Dendritic cell treated with granulocyte-macrophage colony-stimulating factor and Interleukin-4, amounts not matched to agents 40 ng/mL and 50 ng/mL, for 4 days (primary cell): ENCODE measurements at regions of chr11 and their contacts with region 1.

Region 1: DNA sequence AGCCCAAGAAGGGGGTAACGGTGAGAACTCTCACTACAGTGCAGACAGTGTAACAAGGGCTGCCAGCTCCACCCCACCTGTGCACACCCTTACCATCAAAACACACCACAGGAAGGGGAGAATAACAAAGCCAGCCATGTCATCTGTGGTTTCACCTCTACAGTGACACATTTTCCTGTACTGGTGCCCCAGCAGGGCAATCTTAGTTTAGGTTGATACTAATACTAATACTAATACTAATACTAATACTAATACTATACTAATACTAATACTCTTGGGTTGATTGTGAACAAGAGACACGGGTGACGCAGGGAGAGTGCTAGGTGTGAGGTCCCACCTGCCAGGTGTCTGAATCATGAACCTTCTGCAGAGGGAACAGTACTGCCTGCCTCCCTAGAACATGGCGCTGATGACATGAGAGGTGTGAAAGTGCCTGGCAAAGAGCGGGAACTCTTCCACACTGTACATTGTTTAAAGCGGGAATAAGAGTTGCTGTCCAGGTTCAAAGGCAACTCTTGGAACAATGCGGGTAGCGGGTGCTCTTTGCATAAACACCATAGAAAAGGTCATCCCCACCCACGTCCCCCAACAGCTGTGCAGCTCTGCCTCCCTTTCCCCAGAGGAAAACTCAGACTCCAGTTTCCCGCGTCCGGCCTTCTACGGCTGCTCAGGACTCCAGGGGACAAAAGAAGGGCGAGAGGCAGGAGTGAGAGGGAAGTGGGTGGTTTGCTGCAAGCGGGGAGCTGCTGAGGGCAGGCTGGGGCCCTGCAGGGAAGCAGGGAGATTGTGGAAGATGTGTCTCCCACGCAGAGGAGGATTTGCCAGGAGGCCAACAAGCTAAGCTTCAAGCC is 25.0 kb upstream of the TMPRSS4 start:
- H3K4me3 Mint-ChIP-seq: no peak overlapping the region
- H3K27ac Mint-ChIP-seq: peak overlapping the region; percentile 79
- H3K4me1 Mint-ChIP-seq: peaks cover 67% of the 10 kb centered on the region
- H3K27me3 Mint-ChIP-seq: peaks cover 4% of the 10 kb centered on the region

Region 2: DNA sequence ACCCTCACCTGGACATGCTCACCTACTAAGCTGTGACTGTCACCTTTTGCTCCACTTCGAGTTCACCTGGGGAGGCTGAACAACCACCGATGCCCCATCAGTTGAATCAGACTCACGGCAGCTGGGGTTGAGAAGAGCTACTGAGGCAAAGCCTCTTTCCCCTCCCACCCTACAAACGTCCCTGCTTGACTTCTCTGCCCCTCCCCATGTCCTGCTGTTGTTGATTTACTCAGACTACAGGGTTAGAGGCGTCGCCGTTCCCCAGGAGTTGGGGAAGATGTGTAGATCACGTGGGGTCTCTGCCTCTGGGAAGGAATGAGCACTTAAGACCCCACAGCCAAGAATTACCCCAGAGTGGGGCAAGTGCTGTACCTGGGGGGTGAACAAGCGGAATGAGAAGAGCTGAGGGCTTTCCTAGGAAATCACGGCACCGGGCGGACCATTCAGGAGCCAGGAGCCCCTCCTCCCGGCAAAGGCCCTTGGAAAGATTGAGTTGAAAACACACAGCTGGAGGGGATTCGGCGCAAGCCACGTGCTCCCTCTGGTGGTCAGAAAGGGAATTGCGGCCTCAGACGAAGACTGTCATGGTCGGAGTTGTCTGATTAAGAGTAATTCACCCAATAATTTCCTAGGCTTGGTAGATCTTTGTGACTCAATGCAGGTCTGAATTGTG is 234.3 kb before region 1 on chr11:
- intact Hi-C with region 1: loop called (anchors 2 kb)
- H3K4me3 Mint-ChIP-seq: peak overlapping the region; percentile 58
- H3K27ac Mint-ChIP-seq: peak overlapping the region; percentile 97
- H3K4me1 Mint-ChIP-seq: peaks cover 84% of the 10 kb centered on the region
- H3K27me3 Mint-ChIP-seq: no peaks in the 10 kb centered on the region

Region 3: GRCh38 chr11:117843666-117844484 is 208.0 kb before region 1 on chr11:
- intact Hi-C with region 1: loop called (anchors 5 kb)
- H3K4me3 Mint-ChIP-seq: no peak overlapping the region
- H3K27ac Mint-ChIP-seq: peak overlapping the region; percentile 27
- H3K4me1 Mint-ChIP-seq: peaks cover 46% of the 10 kb centered on the region
- H3K27me3 Mint-ChIP-seq: no peaks in the 10 kb centered on the region

Region 4: GRCh38 chr11:117946842-117947526 is 104.9 kb before region 1 on chr11:
- intact Hi-C with region 1: loop called (anchors 2 kb)
- H3K4me3 Mint-ChIP-seq: no peak overlapping the region
- H3K27ac Mint-ChIP-seq: peak overlapping the region; percentile 62
- H3K4me1 Mint-ChIP-seq: peaks cover 83% of the 10 kb centered on the region
- H3K27me3 Mint-ChIP-seq: no peaks in the 10 kb centered on the region

Region 5: DNA sequence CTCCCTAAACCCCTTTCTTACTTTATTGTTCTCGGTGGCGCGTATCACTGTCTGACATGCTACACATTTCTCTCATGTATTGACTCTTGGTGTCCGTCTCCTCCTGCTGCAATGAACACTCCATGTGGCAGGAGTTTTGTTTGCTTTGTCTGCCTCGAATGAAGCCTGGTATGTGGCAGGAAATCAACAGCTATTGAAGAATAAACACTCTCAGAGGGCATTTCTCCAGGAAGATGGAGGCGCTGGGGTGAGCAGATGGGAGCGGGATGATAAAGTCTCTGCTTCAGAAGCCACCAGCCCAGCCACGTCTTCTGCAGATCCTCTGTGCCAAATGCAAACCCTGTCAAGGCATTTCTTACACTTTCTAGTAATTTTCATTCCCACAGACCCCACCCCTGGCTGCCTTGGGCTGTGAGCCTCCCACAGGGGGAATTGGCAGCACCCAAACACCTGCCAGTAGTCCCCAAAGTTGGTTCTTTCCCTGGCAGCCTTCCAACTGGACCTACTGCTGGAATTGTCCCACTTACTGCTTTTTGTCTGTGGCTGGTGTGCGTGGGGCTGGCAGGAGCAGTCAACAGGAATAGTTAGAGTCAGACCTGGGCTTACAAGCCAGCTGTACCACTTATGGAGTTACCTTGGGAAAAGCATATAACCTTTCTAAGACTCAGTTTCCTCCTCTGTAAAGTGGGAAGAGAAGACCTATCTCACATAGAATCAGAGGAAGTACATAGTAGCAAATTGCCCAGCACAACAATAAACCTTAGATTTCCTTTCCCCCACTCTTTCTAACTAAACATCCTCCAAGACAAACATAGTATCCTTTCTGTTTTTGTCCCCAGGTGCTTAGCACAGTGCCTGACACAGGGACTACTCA is 79.0 kb before region 1 on chr11:
- intact Hi-C with region 1: no loop called
- H3K4me3 Mint-ChIP-seq: no peak overlapping the region
- H3K27ac Mint-ChIP-seq: peak overlapping the region; percentile 100
- H3K4me1 Mint-ChIP-seq: peaks cover 95% of the 10 kb centered on the region
- H3K27me3 Mint-ChIP-seq: no peaks in the 10 kb centered on the region

Region 6: DNA sequence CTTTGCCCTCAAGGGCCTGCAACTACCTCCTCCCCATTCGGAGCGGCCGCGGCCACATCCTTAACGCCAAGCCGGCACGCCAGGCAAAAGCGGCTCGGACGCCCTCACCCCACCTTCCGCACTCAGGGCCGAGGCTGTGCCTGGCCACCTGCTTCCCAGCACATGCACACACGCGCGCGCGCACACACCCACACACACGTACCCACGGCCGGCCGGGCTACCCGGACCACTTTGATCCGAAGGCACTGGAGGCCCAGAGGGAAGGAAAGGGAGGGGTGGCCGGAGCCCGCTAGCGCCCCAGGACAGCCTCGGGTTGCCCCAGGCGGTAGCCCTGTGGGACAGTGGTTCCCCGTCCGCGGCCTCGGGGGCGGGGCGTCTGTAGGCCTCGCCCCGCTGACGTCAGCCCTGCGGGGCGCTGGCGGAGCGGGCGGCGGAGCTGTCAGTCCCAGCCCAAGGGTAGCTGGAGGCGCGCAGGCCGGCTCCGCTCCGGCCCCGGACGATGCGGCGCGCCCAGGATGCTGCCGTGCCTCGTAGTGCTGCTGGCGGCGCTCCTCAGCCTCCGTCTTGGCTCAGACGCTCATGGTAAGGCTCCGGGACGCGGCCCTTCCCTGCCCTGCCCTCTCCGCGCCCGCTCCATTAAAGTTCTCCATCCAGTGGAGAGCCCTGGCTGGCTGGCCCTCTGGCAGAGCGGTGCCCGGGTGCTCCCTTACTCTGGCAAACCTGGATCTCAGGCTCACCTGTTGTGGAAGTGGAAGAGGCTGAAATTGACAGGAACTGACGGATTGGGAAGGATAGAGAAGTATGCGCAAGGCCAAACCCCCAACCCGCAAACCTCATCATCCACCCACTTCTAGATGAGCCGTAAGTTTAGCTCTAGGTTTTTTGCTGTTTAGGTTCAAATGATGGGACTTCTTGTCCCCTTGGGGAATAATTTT is 65.6 kb before region 1 on chr11 and contains the start of gene IL10RA:
- intact Hi-C with region 1: loop called (anchors 5 kb)
- H3K4me3 Mint-ChIP-seq: peak within 1 kb of the TSS; percentile 90
- H3K27ac Mint-ChIP-seq: peak within 1 kb of the TSS; percentile 99
- H3K4me1 Mint-ChIP-seq: peaks cover 51% of the 10 kb centered on the region
- H3K27me3 Mint-ChIP-seq: no peaks in the 10 kb centered on the region

Region 7: DNA sequence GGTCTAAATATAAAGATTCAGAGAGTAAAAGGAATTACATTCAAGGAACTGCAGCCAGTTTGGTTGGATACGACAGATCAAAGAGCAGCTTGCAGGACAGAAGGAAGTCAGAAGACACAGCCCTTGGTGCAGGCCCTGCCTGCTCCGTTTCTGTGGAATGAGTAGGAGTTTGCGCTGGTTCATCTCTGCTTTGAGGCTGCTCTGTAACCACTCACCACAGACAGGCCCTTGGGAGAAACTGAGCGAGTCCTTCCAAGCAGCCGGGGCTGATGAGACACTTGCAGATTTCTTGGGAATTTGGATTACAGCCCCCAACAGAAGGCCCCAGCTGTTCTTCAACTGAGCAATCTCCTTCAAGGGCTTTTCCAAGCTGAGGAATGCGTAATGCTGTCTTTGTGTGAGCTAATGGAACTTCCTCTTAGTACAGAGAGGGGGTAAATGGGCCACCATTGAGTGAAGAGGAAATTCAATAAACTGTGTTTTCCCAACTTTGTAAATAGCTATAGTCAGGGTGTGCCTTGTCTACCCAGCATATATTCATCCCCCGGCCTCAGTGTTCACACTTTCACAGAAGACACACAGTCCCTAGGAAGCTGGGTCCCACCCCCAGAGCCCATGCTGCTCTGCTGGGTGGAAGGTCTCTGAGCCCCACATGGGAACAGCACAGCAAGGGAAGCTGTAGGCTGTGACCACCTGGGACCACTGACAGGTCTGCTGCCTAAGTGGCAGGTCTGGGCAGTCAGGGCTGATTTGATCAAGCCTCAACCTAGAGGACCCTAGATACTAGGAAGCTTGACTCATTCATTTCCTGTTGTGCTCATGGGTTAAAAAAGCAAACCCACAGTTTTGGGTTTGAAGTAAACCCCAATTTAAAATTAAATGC is 49.1 kb before region 1 on chr11:
- intact Hi-C with region 1: loop called (anchors 5 kb)
- H3K4me3 Mint-ChIP-seq: no peak overlapping the region
- H3K27ac Mint-ChIP-seq: peak overlapping the region; percentile 92
- H3K4me1 Mint-ChIP-seq: peaks cover 97% of the 10 kb centered on the region
- H3K27me3 Mint-ChIP-seq: no peaks in the 10 kb centered on the region